Activated CD4-positive, alpha-beta memory T cell treated with anti-CD3 and anti-CD28 coated beads for 36 hours (primary cell): ENCODE measurements at regions of chr4 and their contacts with region 1.

Region 1: DNA sequence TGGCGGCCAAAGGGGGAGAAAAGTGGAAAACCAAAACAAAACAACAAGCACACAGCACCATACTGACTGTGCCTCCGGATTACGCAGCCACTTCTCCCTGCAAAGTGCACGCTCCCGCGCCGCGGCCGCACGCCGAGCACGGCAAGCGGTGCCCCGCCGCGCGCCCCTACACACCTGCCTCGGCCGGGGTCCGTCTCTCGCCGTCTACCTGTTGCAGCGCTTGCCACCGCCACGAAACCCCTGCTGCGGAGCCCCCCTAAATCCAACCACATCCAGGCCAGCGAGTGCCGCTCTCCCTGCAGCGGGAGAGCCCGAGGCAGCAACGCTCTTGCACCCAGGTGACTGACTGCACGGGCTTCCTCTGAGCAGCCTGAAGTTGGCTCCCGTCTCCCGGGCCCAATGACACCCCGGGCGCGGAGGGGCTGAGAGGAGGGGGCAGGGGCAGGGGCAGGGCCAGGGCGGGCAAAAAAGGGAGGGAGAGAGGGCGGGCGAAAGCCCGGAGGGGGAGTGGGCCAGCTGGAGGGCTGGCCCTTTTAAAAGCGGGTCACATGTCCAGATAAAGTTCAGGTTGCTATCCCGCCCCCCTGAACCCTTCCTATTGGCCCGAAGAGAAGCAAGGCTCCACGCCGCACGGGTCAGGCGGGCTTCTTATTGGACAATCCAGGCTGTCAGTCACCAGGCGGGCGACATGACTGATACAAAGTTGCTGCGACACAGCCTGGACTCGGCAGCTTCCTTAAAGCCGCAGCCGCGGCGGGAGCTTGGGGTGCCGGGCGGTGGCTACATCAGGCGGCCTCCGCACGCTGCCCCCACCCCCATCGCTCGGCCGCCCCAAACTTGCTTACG is at the start of gene NR3C2:
- DNase-seq: peak; percentile 98
- H3K4me3 Mint-ChIP-seq: peak within 1 kb of the TSS; percentile 96
- H3K27ac Mint-ChIP-seq: peak within 1 kb of the TSS; percentile 91
- H3K4me1 Mint-ChIP-seq: peaks cover 42% of the 10 kb centered on the region
- H3K27me3 Mint-ChIP-seq: peaks cover 5% of the 10 kb centered on the region
- total RNA-seq, gene NR3C2: 4.2 to 4.3 TPM

Region 2: DNA sequence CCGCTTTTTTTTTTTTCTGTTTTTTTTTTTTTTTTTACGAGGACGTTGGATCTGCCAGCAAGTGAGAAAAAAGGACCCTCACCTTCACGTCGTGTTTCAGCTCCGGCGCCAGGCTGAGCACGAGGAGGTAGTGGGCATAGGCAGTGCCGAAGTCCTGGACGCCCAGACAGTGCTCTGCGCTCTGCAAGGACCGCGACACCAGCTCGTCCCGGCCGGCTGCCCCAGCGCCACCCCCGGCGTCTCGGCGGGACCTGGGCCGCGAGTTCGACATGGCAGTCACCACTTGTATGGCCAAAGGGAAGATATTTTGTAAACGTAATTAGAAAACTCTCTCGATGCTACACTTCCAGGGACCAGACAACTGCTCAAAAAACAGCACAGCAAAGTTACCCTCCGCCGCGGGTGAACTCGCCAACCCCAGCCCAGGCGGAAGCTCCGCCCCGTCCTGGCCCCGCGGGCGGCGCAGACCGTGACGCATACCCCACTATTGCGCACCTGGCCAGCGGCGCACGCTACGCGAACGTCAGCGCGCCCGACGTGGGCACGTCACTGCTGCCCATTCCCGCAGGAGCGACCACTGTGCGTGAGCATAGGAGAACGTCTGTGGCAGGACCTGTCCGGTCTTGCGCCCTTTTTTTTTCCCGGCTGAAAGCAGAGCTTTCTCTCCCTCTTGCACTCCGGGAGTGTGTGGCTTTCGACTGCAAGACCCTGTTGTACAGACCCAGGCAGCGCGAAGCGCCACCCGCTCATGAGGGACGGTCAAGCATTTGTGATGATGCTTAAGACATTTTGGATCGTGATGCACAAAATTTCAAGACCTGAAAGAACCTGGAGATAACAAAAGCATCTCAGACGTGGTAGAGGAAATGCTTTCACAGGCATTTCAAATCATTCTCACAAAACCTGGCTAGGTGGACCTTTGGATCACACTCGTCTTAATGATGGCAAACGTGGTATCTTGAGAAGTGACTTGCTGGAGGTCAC is 758.2 kb before region 1 on chr4 and contains the start of gene PRMT9:
- CTCF ChIA-PET with region 1: no interaction called
- POLR2A ChIA-PET with region 1: no interaction called
- intact Hi-C with region 1: loop called (anchors 5 kb)
- DNase-seq: peak; percentile 93
- H3K4me3 Mint-ChIP-seq: peak within 1 kb of the TSS; percentile 85
- H3K27ac Mint-ChIP-seq: peak within 1 kb of the TSS; percentile 88
- H3K4me1 Mint-ChIP-seq: peaks cover 24% of the 10 kb centered on the region
- H3K27me3 Mint-ChIP-seq: no peaks in the 10 kb centered on the region
- total RNA-seq, gene PRMT9: 7.9 to 8.3 TPM

Region 3: DNA sequence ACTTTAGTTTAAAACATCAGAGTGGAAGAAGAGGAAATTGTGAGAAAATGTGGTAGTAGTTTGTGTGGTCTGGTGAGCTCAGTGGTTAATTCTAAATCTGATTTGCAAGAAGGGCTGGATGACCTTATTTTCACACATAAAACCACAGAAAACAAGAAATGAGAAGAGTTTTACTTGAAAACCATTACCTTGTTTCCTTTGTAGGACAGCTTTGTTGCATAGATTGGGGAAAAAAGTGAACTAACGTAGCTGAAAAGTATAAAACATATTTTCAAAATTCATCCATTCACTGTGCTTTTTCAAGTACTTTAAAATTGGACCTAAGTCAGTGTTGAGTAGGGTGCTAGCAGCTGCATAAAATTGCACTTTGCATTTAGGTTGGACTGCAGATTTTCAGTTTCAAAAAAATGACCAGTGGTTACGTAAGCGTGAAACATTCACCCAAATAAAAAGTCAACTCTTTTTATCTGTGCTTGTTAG is 499.0 kb before region 1 on chr4:
- CTCF ChIA-PET with region 1: no interaction called
- POLR2A ChIA-PET with region 1: no interaction called
- intact Hi-C with region 1: loop called (anchors 5 kb)
- DNase-seq: no peak
- H3K4me3 Mint-ChIP-seq: no peak overlapping the region
- H3K27ac Mint-ChIP-seq: peak overlapping the region; percentile 2
- H3K4me1 Mint-ChIP-seq: peaks cover 26% of the 10 kb centered on the region
- H3K27me3 Mint-ChIP-seq: no peaks in the 10 kb centered on the region

Region 4: DNA sequence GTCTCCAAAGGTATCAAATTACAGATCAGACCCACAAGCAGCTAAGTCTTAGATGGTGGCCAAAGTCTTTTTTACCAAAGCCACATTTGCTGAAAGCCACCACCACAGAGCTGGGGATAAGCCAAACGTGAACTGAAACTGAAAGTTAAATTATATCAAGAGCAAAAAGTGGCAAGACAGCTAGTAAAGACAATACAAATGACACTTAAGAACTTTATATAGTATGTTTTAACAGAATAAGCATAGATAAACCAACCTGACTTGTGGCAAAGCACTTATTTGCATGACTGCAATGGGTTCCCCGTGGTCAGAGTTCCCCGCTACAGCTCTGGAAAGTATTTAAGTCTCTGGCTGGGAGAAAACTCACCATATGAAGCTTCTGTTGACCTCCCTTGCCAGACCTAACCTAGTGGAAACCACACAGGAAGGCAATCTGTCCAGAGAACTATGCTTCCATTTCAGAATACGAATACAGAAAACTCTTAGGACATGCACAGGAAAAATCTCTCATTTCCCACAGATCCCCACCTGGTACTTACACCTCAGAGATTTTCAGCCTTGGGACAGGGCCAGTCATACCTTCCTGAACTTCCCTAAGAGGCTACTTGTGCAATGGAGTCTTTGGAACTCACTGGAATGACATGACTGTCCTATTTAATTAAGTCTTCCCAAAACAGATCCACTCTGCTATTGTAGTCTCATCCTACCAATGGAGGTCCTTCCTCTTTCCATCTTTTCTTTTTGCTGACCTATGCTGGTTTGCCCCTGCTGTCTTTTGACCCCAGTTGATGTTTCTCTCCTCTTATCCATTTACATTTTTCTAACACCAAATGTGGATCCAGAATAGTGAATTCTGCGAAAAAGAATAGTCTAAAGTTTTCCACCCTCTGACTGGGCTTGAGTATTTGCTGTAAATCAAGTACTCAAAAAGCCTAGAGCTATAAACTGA is 225.1 kb before region 1 on chr4:
- CTCF ChIA-PET with region 1: no interaction called
- POLR2A ChIA-PET with region 1: no interaction called
- intact Hi-C with region 1: loop called (anchors 2 kb)
- DNase-seq: peak; percentile 34
- H3K4me3 Mint-ChIP-seq: peak overlapping the region; percentile 65
- H3K27ac Mint-ChIP-seq: peak overlapping the region; percentile 70
- H3K4me1 Mint-ChIP-seq: peaks cover 27% of the 10 kb centered on the region
- H3K27me3 Mint-ChIP-seq: no peaks in the 10 kb centered on the region

Region 5: GRCh38 chr4:148376151-148376550 is 66.1 kb before region 1 on chr4:
- CTCF ChIA-PET with region 1: no interaction called
- POLR2A ChIA-PET with region 1: interaction called, 4 read pairs
- intact Hi-C with region 1: loop called (anchors 1 kb)
- DNase-seq: peak; percentile 32
- H3K4me3 Mint-ChIP-seq: peak overlapping the region; percentile 61
- H3K27ac Mint-ChIP-seq: peak overlapping the region; percentile 77
- H3K4me1 Mint-ChIP-seq: peaks cover 28% of the 10 kb centered on the region
- H3K27me3 Mint-ChIP-seq: no peaks in the 10 kb centered on the region

Region 6: DNA sequence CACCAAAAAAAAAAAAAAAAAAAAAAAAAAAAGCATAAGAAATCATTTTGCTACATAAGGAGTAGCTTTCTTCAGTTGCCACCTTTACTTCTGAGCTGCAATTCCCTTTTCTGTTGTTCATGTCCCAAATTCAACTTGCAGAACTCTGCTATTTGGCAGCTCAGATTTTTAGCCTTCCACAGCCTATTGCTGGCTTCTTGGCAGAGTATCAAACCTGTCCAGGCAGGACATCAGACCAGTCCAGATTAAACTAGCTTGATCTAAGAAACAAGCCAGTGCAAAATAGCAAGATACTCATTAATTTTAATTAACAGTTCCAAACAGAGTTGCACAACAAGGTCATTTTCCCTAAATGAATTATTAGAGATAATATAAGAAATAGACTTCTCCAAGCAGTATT is 123.6 kb after region 1 on chr4:
- CTCF ChIA-PET with region 1: no interaction called
- POLR2A ChIA-PET with region 1: no interaction called
- intact Hi-C with region 1: no loop called
- DNase-seq: no peak
- H3K4me3 Mint-ChIP-seq: no peak overlapping the region
- H3K27ac Mint-ChIP-seq: no peak overlapping the region
- H3K4me1 Mint-ChIP-seq: no peaks in the 10 kb centered on the region
- H3K27me3 Mint-ChIP-seq: no peaks in the 10 kb centered on the region